ENCODE measurements at regions of chr6 and their contacts with region 1.

Region 1: GRCh38 chr6:149763866-149764265 is 14.3 kb downstream of the PCMT1 start:
- DNase-seq: no peak
- H3K4me3 ChIP-seq: no peak overlapping the region
- H3K27ac ChIP-seq: no peak overlapping the region
- H3K4me1 ChIP-seq: peaks cover 25% of the 10 kb centered on the region
- CTCF ChIP-seq: no peak

Region 2: DNA sequence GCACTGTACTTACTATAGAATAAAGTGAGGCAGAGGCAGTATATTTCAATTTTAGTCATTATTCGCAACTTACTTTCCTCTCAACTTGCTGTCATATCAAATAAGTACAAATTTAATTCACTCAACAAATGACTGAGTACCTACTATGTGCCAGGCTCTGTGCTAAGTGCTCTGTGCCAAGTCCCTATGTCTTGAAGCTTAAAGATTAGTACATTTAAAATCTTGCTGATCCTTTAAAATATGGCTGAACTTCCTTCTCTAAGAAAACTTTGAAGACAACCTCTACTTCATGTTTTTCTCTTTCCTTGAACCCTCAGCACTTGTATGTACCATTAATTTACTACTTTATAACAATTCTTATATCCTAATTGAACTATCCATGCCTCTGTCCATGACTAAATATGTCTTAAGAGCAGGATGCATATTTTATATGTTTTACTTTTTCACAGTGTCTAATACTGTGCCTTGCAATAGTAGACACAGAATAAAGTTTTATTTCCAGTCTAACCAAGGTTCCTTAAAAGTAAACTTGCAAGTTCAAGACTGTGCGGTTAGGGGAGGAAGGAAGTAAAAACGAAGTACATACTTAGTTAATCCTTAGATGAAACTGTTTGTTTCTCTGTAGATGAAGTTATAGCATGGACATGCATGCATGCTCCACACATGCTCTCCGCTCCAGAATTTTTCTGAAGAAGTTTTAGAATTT is 35.9 kb before region 1 on chr6:
- CTCF ChIA-PET with region 1: no interaction called
- POLR2A ChIA-PET with region 1: no interaction called
- intact Hi-C with region 1: no loop called
- DNase-seq: no peak
- H3K4me3 ChIP-seq: no peak overlapping the region
- H3K27ac ChIP-seq: no peak overlapping the region
- H3K4me1 ChIP-seq: no peaks in the 10 kb centered on the region
- CTCF ChIP-seq: no peak

Region 3: DNA sequence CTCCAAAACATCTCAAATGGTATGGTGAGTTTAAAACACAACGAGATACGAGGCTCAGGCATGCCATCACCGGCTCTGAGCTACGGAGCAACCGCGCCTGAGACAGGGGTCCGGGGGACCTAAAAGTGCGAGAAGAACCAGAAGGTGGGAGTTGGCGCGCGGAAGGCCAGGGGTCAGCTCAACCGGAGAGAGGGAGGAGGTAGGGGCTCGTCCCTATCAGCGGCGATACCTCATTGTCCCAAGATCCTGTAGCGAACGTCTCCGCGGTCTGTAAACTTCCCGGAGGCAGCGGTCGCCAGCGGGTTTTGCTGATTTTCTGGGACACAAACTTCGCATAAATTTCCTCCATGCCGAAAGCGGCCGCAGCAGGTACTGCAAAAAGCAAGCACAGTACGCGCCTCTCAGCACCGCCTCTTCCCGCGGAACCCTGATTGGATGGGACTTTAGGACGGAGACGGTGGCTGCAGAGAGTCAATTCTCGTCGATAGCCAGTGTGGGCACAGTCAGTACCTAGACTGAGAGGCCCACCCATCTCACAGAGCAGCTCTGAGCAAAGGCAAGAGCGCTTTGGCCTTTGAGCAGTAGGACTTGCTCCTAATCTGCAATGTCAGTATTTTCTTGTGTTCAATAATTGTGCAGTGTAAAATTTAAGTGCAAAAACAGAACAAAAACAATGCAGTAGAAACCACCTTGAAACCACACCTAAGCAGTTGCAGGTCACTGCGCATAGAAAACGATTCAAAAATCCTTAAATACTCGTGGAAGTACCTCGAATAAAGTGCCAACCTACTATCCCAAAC is 17.5 kb before region 1 on chr6 and contains the start of gene NUP43:
- CTCF ChIA-PET with region 1: no interaction called
- POLR2A ChIA-PET with region 1: interaction called, 15 read pairs
- intact Hi-C with region 1: no loop called
- DNase-seq: peak; percentile 96
- H3K4me3 ChIP-seq: peak within 1 kb of the TSS; percentile 80
- H3K27ac ChIP-seq: peak within 1 kb of the TSS; percentile 74
- H3K4me1 ChIP-seq: peaks cover 24% of the 10 kb centered on the region
- CTCF ChIP-seq: peak; percentile 67
- total RNA-seq, gene NUP43: 28.6 and 30.7 TPM in 2 replicates

Region 4: DNA sequence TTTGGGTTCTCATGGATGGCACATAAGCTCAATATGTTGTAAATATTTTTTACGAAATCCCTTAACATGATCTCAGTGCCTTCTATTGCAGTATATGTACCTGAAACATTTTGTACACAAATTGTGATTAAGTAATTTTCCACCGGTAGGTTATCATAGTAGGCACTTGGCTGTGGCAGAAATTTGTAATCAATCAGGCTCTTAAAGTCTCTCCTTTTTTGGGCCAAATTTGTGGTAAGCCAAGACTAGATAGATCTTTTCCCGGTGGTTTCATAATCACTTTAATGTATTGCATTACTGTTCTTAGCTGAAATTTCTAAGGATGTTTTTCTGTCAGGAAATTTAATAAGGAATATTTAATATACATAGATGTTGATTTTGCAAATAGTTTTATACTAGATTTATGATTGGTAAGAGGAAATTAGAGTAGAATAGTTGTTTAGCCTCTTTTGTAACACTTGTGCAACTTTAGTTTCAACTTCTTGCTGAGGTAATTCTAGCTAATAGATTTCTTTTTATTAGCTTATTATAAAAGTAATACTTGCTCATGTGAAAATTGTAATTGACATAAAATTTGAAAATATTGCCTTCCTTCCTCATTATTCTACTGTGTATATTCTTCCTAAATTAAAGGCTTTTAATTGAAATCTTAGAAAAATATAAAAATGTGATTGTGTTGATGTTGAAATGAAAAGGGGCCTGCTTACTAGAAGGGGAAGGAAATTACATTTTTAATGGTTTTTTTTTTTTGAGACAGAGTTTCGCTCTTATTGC is 11.1 kb before region 1 on chr6:
- CTCF ChIA-PET with region 1: no interaction called
- POLR2A ChIA-PET with region 1: interaction called, 15 read pairs
- intact Hi-C with region 1: no loop called
- DNase-seq: no peak
- H3K4me3 ChIP-seq: no peak overlapping the region
- H3K27ac ChIP-seq: no peak overlapping the region
- H3K4me1 ChIP-seq: peaks cover 46% of the 10 kb centered on the region
- CTCF ChIP-seq: no peak